Heart left ventricle (tissue), 16 donors: ENCODE measurements at regions of chr7 and their contacts with region 1.

Region 1: DNA sequence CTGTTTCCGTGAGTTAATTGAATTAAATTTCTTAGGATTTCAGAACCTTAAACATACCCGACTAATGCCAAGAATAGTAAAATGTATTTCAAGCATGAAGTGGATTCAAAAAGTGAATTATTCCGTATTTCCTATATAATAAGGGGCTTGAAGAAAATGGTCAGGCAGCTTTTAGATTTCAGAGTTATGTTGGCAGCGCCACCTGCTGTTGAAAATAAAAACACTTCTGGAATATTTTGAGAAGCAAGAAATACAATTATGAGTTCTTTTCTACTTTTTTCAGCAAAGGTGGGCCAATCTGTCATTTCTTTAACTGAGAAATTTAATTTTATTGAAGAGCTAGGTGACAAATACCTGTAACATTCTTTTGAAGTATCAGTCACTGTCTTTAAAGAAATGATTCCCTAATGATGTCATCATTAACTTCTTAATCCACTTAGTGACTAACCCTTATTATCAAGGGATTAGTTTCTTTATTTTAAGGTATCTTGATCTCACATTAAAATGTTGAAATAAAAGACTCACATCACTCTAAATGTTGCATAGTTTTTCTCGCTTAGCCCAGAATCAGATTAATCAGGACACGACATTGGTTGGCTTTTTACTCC is 36.6 kb upstream of the AGR3 start:
- DNase-seq: no peak
- ATAC-seq: no peak
- H3K4me3 ChIP-seq: no peak overlapping the region
- H3K27ac ChIP-seq: no peak overlapping the region
- H3K4me1 ChIP-seq: no peaks in the 10 kb centered on the region
- H3K27me3 ChIP-seq: no peaks in the 10 kb centered on the region
- CTCF ChIP-seq: peak; percentile 60 to 86 (median 75)
- POLR2A ChIP-seq: no peak

Region 2: DNA sequence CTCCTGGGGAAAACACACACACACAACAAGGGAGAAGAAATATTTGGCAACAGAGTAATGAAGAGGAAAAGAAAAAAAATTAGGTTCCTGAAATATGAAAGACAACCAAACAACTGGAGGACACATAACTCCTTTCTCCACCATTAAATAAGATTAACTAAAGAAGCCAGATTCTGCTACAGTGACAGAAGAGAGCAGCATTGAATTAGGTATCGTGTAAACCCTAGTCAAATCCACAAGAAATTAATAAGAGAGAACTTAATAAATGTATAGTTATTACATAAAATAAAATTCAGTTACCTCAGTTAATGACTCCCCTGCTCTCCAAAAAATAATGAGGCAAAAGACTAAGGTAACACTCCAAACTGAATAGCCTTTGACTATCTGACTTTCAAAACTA is 803.8 kb before region 1 on chr7:
- intact Hi-C with region 1: loop called in 1 of 10 experiments (anchors 10 kb)
- DNase-seq: no peak
- ATAC-seq: peak in 1 of 4 donors; percentile 46
- H3K4me3 ChIP-seq: no peak overlapping the region
- H3K27ac ChIP-seq: no peak overlapping the region
- H3K4me1 ChIP-seq: no peaks in the 10 kb centered on the region
- H3K27me3 ChIP-seq: no peaks in the 10 kb centered on the region
- CTCF ChIP-seq: peak; percentile 16 to 62 (median 46)
- POLR2A ChIP-seq: no peak

Region 3: DNA sequence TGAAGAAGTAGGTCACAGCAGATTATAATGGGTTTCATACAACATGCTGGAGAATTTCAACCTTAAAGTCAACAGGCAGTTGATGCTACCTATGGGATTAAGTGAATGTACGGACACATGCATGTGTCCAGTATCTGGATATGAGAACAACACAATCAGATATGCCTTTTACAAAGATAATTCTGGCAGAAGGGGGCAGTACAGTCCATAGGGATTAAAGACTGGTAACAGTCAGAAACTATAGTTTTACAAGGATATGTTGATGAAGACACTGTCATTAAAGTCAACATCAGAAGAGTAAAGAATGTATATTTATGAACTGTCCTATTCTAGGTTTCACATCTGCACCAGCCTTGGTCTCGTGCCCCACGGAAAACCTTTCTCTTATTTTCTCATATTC is 314.3 kb before region 1 on chr7:
- intact Hi-C with region 1: loop called in 1 of 10 experiments (anchors 10 kb)
- DNase-seq: no peak
- ATAC-seq: no peak
- H3K4me3 ChIP-seq: no peak overlapping the region
- H3K27ac ChIP-seq: no peak overlapping the region
- H3K4me1 ChIP-seq: no peaks in the 10 kb centered on the region
- H3K27me3 ChIP-seq: no peaks in the 10 kb centered on the region
- CTCF ChIP-seq: peak in 5 of 12 donors; percentile 10 to 21 (median 15)
- POLR2A ChIP-seq: no peak

Region 4: GRCh38 chr7:16619979-16620408 is 298.4 kb before region 1 on chr7:
- intact Hi-C with region 1: loop called in 1 of 10 experiments (anchors 10 kb)
- DNase-seq: no peak
- ATAC-seq: peak in 3 of 4 donors; percentile 54 to 76 (median 70)
- H3K4me3 ChIP-seq: no peak overlapping the region
- H3K27ac ChIP-seq: no peak overlapping the region
- H3K4me1 ChIP-seq: peaks cover 0 to 4% (median 0%) of the 10 kb centered on the region in 12 donors
- H3K27me3 ChIP-seq: no peaks in the 10 kb centered on the region
- CTCF ChIP-seq: no peak
- POLR2A ChIP-seq: no peak

Region 5: DNA sequence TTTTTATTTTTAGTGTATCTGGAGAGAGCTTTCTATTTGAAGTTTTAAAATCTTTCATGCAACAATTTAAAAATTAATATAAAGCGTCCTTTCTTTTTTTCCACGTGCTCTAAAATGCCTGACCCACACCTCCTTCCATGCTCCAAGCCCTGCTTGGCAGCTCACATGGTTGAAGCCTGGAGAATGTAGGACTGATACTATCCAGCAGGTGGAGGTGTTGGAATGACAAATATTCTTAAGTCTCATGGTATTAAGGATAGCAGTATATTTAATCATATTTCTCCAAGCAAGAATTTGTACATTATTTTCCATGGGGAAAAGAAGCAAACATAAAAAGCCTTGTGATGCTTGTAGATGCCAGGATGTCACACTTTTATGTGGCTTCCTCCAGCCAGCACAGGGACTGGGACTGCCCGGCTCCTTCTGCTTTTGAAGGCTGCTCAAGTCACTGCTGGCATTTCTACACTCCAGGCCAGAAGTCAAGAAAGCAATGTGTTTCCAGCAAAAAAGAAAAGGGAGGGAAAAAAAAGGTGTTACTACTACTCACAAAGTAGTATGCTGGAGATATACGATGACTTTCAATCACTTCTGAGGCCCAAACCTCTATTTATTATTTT is 222.7 kb before region 1 on chr7:
- intact Hi-C with region 1: loop called (anchors 2 to 5 kb)
- DNase-seq: peak in 1 of 5 donors; percentile 16
- ATAC-seq: peak; percentile 26 to 88 (median 73)
- H3K4me3 ChIP-seq: no peak overlapping the region
- H3K27ac ChIP-seq: no peak overlapping the region
- H3K4me1 ChIP-seq: peaks cover 0 to 3% (median 0%) of the 10 kb centered on the region in 12 donors
- H3K27me3 ChIP-seq: no peaks in the 10 kb centered on the region
- CTCF ChIP-seq: peak; percentile 33 to 69 (median 56)
- POLR2A ChIP-seq: no peak

Region 6: DNA sequence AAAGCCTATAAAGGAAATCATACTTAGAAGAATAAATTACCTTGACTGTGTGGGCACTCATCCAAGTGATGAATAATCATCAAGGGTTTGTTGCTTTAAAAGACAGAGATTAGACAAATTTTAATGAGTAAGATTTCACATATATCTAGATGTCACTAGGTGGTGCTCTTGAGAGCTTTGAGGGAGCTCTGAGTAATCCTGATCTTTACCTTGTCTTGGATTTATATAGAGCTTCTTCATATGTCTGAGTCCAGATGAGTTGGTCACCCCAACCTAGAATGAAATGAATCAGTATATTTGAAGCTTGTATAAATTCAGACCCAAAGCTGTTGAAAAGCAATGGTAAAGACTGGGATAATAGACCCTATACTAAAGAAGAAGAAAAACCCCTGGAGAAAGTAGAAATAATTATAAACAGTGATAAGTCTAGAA is 117.3 kb before region 1 on chr7:
- intact Hi-C with region 1: loop called in 7 of 10 experiments (anchors 2 to 10 kb)
- DNase-seq: no peak
- ATAC-seq: no peak
- H3K4me3 ChIP-seq: no peak overlapping the region
- H3K27ac ChIP-seq: no peak overlapping the region
- H3K4me1 ChIP-seq: no peaks in the 10 kb centered on the region
- H3K27me3 ChIP-seq: no peaks in the 10 kb centered on the region
- CTCF ChIP-seq: peak; percentile 16 to 57 (median 43)
- POLR2A ChIP-seq: no peak